Activated CD8-positive, alpha-beta memory T cell treated with anti-CD3 and anti-CD28 coated beads, Interleukin-2, amount 10 ng/mL, durations not matched to agents 7 days and 5 days (primary cell): ENCODE measurements at regions of chr11 and their contacts with region 1.

Region 1: DNA sequence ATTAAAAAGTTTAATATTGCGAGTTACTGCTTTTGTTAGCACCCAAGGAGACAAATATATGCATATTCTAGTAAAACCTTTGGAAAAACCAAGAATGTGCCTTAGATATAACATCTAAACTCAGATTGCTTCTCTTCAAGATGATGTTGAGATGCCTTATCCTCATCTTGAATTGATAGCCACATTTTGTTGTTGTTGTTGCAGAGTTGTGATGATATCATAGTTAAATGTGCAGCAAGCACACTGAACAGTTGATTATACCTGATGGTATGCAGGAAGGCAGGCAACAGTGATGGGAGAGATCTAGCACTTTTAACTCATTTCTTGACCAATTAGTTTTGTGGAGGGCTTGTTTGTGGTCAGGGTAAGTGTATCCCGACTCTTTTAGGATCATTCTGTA is 48.0 kb downstream of the KDM2A start:
- DNase-seq: no peak
- ATAC-seq: no peak
- H3K4me3 Mint-ChIP-seq: no peak overlapping the region
- H3K27ac Mint-ChIP-seq: no peak overlapping the region
- H3K4me1 Mint-ChIP-seq: peaks cover 20% of the 10 kb centered on the region
- H3K27me3 Mint-ChIP-seq: no peaks in the 10 kb centered on the region

Region 2: DNA sequence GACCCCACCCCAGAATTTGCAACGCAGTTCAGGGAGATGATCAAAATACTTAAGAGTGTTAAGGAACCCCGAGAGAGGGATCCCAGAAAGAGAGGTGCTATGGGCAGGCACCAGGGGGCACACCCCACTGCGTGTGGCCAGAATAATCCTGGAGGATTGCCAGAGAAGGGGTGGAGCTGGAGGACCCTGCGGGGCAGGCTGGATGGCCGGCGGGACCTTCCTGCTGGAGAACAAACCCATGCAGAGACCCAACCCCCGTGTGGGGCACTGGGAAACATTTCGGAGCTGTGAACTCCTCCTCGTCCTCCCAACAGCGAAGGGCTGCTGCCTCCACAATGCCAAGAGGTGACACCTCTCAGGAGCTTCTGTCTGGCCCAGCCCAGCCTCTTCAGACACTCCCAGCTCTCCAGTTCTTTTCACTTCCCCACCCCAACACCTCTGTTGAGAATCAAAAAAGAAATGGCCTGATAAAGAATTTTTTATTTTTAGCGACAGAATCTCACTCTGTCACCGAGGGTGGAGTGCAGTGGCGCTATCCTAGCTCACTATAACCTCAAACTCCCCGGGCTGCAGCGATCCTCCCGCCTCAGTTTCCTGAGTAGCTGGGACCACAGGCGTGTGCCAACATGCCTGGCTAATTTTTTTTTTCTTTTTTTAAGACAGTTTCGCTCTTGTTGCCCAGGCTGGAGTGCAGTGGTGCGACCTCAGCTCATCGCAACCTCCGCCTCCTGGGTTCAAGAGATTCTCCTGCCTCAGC is 84.9 kb before region 1 on chr11:
- CTCF ChIA-PET with region 1: interaction called, 15 read pairs
- DNase-seq: no peak
- ATAC-seq: no peak
- H3K4me3 Mint-ChIP-seq: no peak overlapping the region
- H3K27ac Mint-ChIP-seq: no peak overlapping the region
- H3K4me1 Mint-ChIP-seq: peaks cover 21% of the 10 kb centered on the region
- H3K27me3 Mint-ChIP-seq: no peaks in the 10 kb centered on the region

Region 3: GRCh38 chr11:67095214-67095507 is 71.9 kb before region 1 on chr11:
- CTCF ChIA-PET with region 1: interaction called, 12 read pairs
- DNase-seq: no peak
- ATAC-seq: no peak
- H3K4me3 Mint-ChIP-seq: no peak overlapping the region
- H3K27ac Mint-ChIP-seq: no peak overlapping the region
- H3K4me1 Mint-ChIP-seq: peaks cover 5% of the 10 kb centered on the region
- H3K27me3 Mint-ChIP-seq: no peaks in the 10 kb centered on the region

Region 4: DNA sequence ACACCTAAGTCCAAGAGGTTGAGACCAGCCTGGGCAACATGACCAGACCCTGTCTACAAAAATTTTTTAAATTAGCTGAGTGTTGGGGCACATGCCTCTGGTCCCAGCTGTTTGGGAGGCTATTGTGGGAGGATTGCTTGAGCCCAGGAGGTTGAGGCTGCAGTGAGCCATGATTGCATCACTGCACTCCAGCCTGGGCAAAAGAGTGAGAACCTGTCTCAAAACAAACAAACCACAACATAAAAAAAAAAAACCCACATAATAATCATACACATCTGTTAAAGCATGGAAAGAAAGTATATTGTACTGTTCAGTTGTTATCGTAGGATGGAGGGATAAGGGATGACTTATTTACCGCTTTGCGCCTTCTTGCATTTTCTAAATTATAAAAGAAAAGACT is 63.3 kb after region 1 on chr11:
- CTCF ChIA-PET with region 1: no interaction called
- DNase-seq: no peak
- ATAC-seq: no peak
- H3K4me3 Mint-ChIP-seq: no peak overlapping the region
- H3K27ac Mint-ChIP-seq: no peak overlapping the region
- H3K4me1 Mint-ChIP-seq: peaks cover 19% of the 10 kb centered on the region
- H3K27me3 Mint-ChIP-seq: no peaks in the 10 kb centered on the region